CD8-positive, alpha-beta T cell (primary cell): ENCODE measurements at regions of chr13 and their contacts with region 1.

Region 1: GRCh38 chr13:51583875-51584730 is at the start of gene WDFY2:
- DNase-seq: peak; percentile 98 to 100 (median 99)
- ATAC-seq: peak; percentile 82
- H3K4me3 ChIP-seq: peak within 1 kb of the TSS; percentile 71 to 81
- H3K4me3 Mint-ChIP-seq: peak within 1 kb of the TSS; percentile 99
- H3K27ac ChIP-seq: peak within 1 kb of the TSS; percentile 83 to 89
- H3K27ac Mint-ChIP-seq: peak within 1 kb of the TSS; percentile 100
- H3K4me1 ChIP-seq: peaks cover 11% of the 10 kb centered on the region
- H3K4me1 Mint-ChIP-seq: peaks cover 35% of the 10 kb centered on the region
- H3K27me3 ChIP-seq: no peaks in the 10 kb centered on the region
- H3K27me3 Mint-ChIP-seq: no peaks in the 10 kb centered on the region
- CTCF ChIP-seq: no peak
- total RNA-seq, gene WDFY2: 17.2 to 18.6 TPM

Region 2: DNA sequence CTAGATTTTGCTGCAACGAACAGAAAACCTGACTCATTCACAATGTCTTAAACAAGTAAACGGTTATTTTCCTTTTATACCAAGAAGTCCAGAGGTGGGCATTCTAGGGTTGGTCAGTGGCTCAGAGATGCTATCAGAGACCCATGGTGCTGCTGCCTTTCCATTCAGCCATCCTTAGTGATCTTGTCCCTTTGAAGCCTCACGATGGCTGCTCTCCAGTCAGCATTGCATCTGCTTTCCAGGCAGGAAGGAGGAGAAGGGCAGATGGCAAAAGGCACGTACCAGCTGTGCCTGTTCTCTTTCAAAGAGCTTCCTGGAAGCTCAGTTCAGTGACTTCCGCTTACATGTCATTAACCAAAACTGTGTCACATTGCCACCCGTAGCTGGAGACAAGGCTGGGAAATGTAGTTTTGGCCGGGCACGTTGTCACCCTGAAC is 30.3 kb after region 1 on chr13:
- CTCF ChIA-PET with region 1: interaction called, 3 read pairs
- POLR2A ChIA-PET with region 1: interaction called, 15 read pairs
- intact Hi-C with region 1: loop called (anchors 1 to 2 kb)
- DNase-seq: peak; percentile 5 to 75 (median 39)
- ATAC-seq: peak; percentile 96
- H3K4me3 ChIP-seq: peak overlapping the region; percentile 26 to 40
- H3K4me3 Mint-ChIP-seq: peak overlapping the region; percentile 78
- H3K27ac ChIP-seq: peak overlapping the region; percentile 32 to 67
- H3K27ac Mint-ChIP-seq: peak overlapping the region; percentile 90
- H3K4me1 ChIP-seq: peaks cover 3% of the 10 kb centered on the region
- H3K4me1 Mint-ChIP-seq: peaks cover 18% of the 10 kb centered on the region
- H3K27me3 ChIP-seq: no peaks in the 10 kb centered on the region
- H3K27me3 Mint-ChIP-seq: no peaks in the 10 kb centered on the region
- CTCF ChIP-seq: no peak

Region 3: GRCh38 chr13:51645154-51645650 is 61.1 kb after region 1 on chr13:
- CTCF ChIA-PET with region 1: interaction called, 4 read pairs
- POLR2A ChIA-PET with region 1: interaction called, 5 read pairs
- intact Hi-C with region 1: loop called (anchors 1 to 5 kb)
- DNase-seq: peak in 4 of 9 experiments; percentile 37 to 80 (median 62)
- ATAC-seq: peak; percentile 81
- H3K4me3 ChIP-seq: no peak overlapping the region
- H3K4me3 Mint-ChIP-seq: peak overlapping the region; percentile 52
- H3K27ac ChIP-seq: peak overlapping the region; percentile 66 to 71
- H3K27ac Mint-ChIP-seq: peak overlapping the region; percentile 96
- H3K4me1 ChIP-seq: peaks cover 44% of the 10 kb centered on the region
- H3K4me1 Mint-ChIP-seq: peaks cover 50% of the 10 kb centered on the region
- H3K27me3 ChIP-seq: no peaks in the 10 kb centered on the region
- H3K27me3 Mint-ChIP-seq: no peaks in the 10 kb centered on the region
- CTCF ChIP-seq: no peak

Region 4: DNA sequence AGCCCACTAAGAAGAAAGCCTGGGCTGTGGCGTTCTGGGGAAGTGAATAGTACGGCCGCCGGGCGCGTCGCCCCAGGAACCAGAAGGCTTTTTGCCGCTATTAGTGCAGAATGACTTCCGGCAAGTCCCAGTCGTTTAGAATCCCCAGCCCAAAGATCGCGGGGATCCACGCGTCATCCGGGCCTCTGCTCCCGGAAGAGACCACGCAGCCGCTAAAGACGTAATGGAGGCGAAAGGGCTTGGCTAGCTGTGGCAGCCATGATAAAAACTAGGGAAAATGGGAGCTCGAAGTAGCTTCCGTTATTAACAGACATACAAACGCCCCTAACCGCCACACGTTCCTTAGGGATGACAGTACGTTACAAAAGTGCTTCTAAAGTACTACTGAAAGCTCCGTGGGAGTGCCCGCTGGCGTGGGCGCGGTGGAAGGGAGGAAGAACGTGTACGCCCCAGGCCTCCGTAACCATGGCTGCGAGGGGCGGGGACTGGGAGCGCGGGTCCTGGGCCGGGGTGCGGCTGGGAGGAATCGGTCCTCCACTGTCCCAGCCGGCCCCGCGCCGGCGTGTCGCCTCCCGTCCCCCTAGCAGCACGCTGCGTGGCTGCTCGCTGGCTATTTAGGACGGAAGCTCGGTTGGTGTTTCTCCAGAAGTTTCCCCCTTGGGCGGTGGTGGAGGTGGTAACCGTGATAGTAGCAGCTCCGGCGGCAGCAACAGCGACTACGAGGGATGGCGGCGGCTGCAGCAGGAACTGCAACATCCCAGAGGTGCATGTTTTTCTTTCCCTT is 1068.3 kb after region 1 on chr13 and contains the start of gene SUGT1:
- CTCF ChIA-PET with region 1: no interaction called
- POLR2A ChIA-PET with region 1: no interaction called
- intact Hi-C with region 1: loop called in 1 of 2 experiments (anchors 5 kb)
- DNase-seq: peak; percentile 88 to 98 (median 95)
- ATAC-seq: peak; percentile 92
- H3K4me3 ChIP-seq: peak within 1 kb of the TSS; percentile 70 to 87
- H3K4me3 Mint-ChIP-seq: no peak within 1 kb of the TSS
- H3K27ac ChIP-seq: peak within 1 kb of the TSS; percentile 94 to 96
- H3K27ac Mint-ChIP-seq: no peak within 1 kb of the TSS
- H3K4me1 ChIP-seq: peaks cover 32% of the 10 kb centered on the region
- H3K4me1 Mint-ChIP-seq: peaks cover 7% of the 10 kb centered on the region
- H3K27me3 ChIP-seq: no peaks in the 10 kb centered on the region
- H3K27me3 Mint-ChIP-seq: no peaks in the 10 kb centered on the region
- CTCF ChIP-seq: peak; percentile 68
- total RNA-seq, gene SUGT1: 17.8 to 20.0 TPM